GM12878 (cell line): ENCODE measurements at regions of chr15 and their contacts with region 1.

Region 1: GRCh38 chr15:81265944-81266775 is 57.8 kb downstream of the STARD5 start:
- DNase-seq: no peak
- ATAC-seq: peak; percentile 97
- H3K4me3 ChIP-seq: no peak overlapping the region
- H3K27ac ChIP-seq: no peak overlapping the region
- H3K4me1 ChIP-seq: peaks cover 22% of the 10 kb centered on the region
- H3K27me3 ChIP-seq: no peaks in the 10 kb centered on the region; a peak in 1 of 4 replicates
- CTCF ChIP-seq: peak; percentile 93 to 94 (median 94)
- EP300 ChIP-seq: no peak
- POLR2A ChIP-seq: no peak
- RAD21 ChIP-seq: peak; percentile 92

Region 2: GRCh38 chr15:80929225-80929624 is 336.9 kb before region 1 on chr15:
- CTCF ChIA-PET with region 1: no interaction called
- POLR2A ChIA-PET with region 1: no interaction called
- RAD21 ChIA-PET with region 1: no interaction called
- SMC1A ChIA-PET with region 1: no interaction called
- in situ Hi-C with region 1: no loop called
- intact Hi-C with region 1: no loop called
- DNase-seq: no peak
- ATAC-seq: no peak
- H3K4me3 ChIP-seq: no peak overlapping the region
- H3K27ac ChIP-seq: no peak overlapping the region
- H3K4me1 ChIP-seq: no peaks in the 10 kb centered on the region
- H3K27me3 ChIP-seq: no peaks in the 10 kb centered on the region; a peak in 1 of 4 replicates
- CTCF ChIP-seq: no peak
- EP300 ChIP-seq: no peak
- POLR2A ChIP-seq: no peak
- RAD21 ChIP-seq: no peak

Region 3: DNA sequence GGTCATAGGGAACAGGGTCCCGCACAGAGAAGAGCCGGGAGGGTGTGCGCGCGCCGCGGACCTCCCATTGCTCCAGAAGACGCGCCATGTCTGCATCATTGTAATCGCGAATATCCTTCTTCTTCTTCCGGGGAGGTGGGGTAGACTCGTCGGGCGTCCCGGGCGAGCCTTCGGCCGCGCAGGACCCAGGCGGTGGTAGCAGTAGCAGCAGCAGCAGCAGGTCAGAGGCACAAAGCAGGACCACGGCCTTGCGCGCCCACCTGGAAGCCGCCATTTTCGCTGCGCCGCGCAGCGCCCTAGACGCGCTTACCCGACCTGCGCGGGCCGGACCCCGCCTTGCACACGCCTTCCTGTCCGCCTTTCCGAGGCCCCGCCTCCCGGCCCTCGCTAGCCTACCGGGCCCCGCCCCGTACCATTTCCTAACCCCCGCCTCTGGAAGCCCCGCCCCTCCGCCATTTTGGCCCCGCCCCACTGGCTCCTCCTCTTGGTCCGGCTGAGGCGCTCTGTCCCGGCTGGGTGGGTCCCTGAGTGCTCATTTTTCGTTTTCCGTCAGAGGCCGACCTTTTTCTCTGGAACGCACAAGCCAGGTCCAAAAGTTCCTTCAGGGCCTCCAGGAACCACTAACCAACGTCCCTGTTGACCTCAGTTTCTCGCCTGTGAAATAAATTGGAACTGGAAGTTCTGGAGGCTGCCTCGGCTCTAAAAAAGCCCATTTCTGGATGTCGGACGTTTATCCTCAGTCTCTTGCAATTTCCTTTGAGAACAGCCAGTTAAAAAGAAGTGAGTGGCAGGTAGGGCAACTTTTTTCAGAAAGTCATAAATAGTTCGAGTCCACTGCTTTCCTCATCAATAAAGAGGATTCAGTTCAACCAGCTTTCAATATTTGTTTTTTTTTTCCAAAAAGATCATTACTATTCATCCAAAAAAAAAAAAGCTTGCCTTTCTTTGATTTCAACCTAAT is 276.4 kb before region 1 on chr15 and contains the start of gene MESD:
- CTCF ChIA-PET with region 1: interaction called, 29 read pairs
- POLR2A ChIA-PET with region 1: no interaction called
- RAD21 ChIA-PET with region 1: interaction called, 14 read pairs
- SMC1A ChIA-PET with region 1: interaction called, 12 read pairs
- in situ Hi-C with region 1: no loop called
- intact Hi-C with region 1: no loop called
- DNase-seq: peak; percentile 70
- ATAC-seq: peak; percentile 97
- H3K4me3 ChIP-seq: peak within 1 kb of the TSS; percentile 94
- H3K27ac ChIP-seq: peak within 1 kb of the TSS; percentile 80
- H3K4me1 ChIP-seq: peaks cover 4% of the 10 kb centered on the region
- H3K27me3 ChIP-seq: no peaks in the 10 kb centered on the region
- CTCF ChIP-seq: no peak
- EP300 ChIP-seq: no peak
- POLR2A ChIP-seq: peak; percentile 99
- RAD21 ChIP-seq: no peak
- polyA plus RNA-seq, gene MESD: 10.2 to 16.7 TPM

Region 4: GRCh38 chr15:81111510-81112470 is 154.4 kb before region 1 on chr15:
- CTCF ChIA-PET with region 1: interaction called, 438 read pairs
- POLR2A ChIA-PET with region 1: no interaction called
- RAD21 ChIA-PET with region 1: interaction called, 130 read pairs
- SMC1A ChIA-PET with region 1: interaction called, 89 read pairs
- in situ Hi-C with region 1: loop called (anchors 5 kb)
- intact Hi-C with region 1: loop called (anchors 1 kb)
- DNase-seq: peak; percentile 43
- ATAC-seq: peak; percentile 96
- H3K4me3 ChIP-seq: no peak overlapping the region
- H3K27ac ChIP-seq: no peak overlapping the region
- H3K4me1 ChIP-seq: peaks cover 11% of the 10 kb centered on the region
- H3K27me3 ChIP-seq: no peaks in the 10 kb centered on the region
- CTCF ChIP-seq: no peak
- EP300 ChIP-seq: no peak
- POLR2A ChIP-seq: no peak
- RAD21 ChIP-seq: no peak

Region 5: DNA sequence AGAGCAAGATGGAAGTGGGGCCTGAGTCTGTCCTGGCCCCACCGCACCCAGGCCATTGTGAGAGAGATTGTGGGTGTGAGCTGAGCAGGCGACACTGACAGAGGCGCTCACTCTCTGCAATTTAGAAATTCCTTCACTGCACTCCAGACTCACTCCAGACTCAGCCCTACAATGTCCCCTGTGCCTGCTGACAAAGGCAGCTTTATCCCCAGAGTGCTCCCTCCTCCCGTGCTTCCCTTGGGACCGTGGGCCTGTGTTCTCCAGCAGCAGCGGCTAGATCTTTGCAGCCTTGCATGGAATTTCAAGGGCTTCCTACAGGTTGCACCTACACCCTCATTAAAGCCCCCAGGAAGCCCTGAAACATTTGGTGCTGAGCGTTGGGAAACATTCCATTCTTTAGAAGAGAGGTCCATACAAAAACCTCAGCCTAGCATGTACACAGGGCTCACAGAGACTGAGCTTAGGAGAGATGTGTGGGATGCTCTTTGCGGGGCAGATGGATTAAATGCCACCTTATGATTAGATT is 70.8 kb before region 1 on chr15:
- CTCF ChIA-PET with region 1: interaction called, 16 read pairs
- POLR2A ChIA-PET with region 1: no interaction called
- RAD21 ChIA-PET with region 1: interaction called, 4 read pairs
- SMC1A ChIA-PET with region 1: interaction called, 5 read pairs
- in situ Hi-C with region 1: no loop called
- intact Hi-C with region 1: no loop called
- DNase-seq: no peak
- ATAC-seq: no peak
- H3K4me3 ChIP-seq: no peak overlapping the region
- H3K27ac ChIP-seq: no peak overlapping the region
- H3K4me1 ChIP-seq: no peaks in the 10 kb centered on the region
- H3K27me3 ChIP-seq: no peaks in the 10 kb centered on the region
- CTCF ChIP-seq: no peak
- EP300 ChIP-seq: no peak
- POLR2A ChIP-seq: no peak
- RAD21 ChIP-seq: no peak

Region 6: DNA sequence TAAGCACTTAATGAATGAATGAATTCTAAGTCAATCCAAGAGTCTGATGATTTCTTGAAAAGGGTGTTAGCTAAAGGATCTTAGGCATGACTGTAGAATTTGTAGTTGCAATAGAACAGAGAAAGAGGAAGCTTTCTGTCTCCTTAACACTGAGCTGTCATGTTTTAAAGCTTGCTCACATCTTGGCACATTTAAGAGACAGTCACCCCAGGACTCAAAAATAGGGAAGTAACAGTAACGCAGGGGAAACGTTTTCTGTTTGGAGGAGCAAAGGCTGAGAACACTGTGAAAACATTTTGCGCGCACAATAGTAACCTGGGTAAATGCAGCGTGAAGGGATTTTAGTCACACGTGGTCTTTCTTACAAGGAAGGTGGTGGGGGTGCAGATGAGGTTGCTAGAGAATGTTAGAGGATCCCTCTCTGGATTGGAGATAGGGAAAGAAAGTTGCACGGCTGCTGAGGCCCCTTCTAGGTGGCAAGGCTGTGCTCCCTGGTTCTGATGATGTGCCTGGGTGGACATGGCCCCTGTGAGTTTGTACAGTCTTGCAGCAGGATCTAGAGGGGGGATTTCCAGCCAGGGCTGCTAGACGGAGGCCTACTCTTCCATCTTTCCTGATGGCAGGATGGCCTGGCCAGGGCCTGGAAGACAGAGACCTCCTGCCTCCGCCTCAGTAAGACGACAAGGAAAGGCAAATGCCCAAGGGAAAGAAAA is 45.7 kb after region 1 on chr15:
- CTCF ChIA-PET with region 1: interaction called, 24 read pairs
- POLR2A ChIA-PET with region 1: no interaction called
- RAD21 ChIA-PET with region 1: interaction called, 6 read pairs
- SMC1A ChIA-PET with region 1: interaction called, 6 read pairs
- in situ Hi-C with region 1: no loop called
- intact Hi-C with region 1: no loop called
- DNase-seq: no peak
- ATAC-seq: peak; percentile 74
- H3K4me3 ChIP-seq: no peak overlapping the region
- H3K27ac ChIP-seq: peak overlapping the region; percentile 61
- H3K4me1 ChIP-seq: peaks cover 36% of the 10 kb centered on the region
- H3K27me3 ChIP-seq: no peaks in the 10 kb centered on the region
- CTCF ChIP-seq: no peak
- EP300 ChIP-seq: no peak
- POLR2A ChIP-seq: no peak
- RAD21 ChIP-seq: no peak

Region 7: GRCh38 chr15:81381720-81382119 is 115.6 kb after region 1 on chr15:
- CTCF ChIA-PET with region 1: interaction called, 10 read pairs
- POLR2A ChIA-PET with region 1: no interaction called
- RAD21 ChIA-PET with region 1: no interaction called
- SMC1A ChIA-PET with region 1: no interaction called
- in situ Hi-C with region 1: no loop called
- intact Hi-C with region 1: no loop called
- DNase-seq: no peak
- ATAC-seq: no peak
- H3K4me3 ChIP-seq: no peak overlapping the region
- H3K27ac ChIP-seq: no peak overlapping the region
- H3K4me1 ChIP-seq: no peaks in the 10 kb centered on the region
- H3K27me3 ChIP-seq: peaks cover 0 to 1% of the 10 kb centered on the region in 2 experiments; a peak in 2 of 4 replicates
- CTCF ChIP-seq: no peak
- EP300 ChIP-seq: no peak
- POLR2A ChIP-seq: no peak
- RAD21 ChIP-seq: no peak